Activated CD4-positive, alpha-beta memory T cell treated with anti-CD3 and anti-CD28 coated beads for 36 hours (primary cell): ENCODE measurements at regions of chr7 and their contacts with region 1.

Region 1: DNA sequence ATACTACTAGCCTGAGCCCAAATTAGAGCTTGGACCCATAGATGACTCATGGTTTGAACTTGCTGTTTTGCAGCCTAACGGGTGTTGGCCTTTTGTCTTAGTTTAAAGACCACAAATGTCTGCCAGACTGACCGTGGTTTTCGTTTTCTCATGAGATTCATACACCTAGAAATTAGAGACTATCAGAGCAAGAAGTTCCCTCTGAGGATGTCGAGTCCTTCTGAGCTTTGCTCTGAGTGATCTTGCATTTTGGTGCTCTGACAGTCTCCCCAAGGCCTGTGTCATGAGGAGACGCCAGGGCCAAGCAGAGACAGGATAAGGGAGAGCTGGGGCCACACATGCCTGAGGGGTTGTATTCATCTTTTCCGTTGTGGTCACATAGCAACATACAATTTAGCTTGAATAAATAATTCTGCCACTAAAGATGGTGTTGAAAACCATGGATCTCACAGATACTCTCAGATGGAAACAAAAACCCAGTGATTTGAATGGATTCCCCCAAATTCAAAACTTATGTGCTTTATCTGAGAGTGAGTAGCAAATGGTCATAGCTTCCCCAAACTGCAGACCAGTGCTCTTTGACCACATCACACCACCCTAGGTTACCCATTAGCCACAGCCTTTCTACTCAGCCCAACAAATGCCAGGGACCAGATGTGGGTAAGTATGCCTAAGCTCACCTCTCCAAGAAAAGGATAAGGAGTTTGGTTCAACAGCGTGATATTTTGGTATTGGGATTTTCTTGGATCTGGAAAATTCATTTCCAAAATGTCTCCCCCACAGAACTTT is 762.0 kb upstream of the IGFBP3 start:
- DNase-seq: no peak
- H3K4me3 Mint-ChIP-seq: no peak overlapping the region
- H3K27ac Mint-ChIP-seq: no peak overlapping the region
- H3K4me1 Mint-ChIP-seq: no peaks in the 10 kb centered on the region
- H3K27me3 Mint-ChIP-seq: no peaks in the 10 kb centered on the region

Region 2: GRCh38 chr7:46363688-46364303 is 319.2 kb before region 1 on chr7:
- CTCF ChIA-PET with region 1: no interaction called
- POLR2A ChIA-PET with region 1: no interaction called
- intact Hi-C with region 1: no loop called
- DNase-seq: no peak
- H3K4me3 Mint-ChIP-seq: no peak overlapping the region
- H3K27ac Mint-ChIP-seq: no peak overlapping the region
- H3K4me1 Mint-ChIP-seq: no peaks in the 10 kb centered on the region
- H3K27me3 Mint-ChIP-seq: no peaks in the 10 kb centered on the region

Region 3: GRCh38 chr7:46745707-46746090 is 62.7 kb after region 1 on chr7:
- CTCF ChIA-PET with region 1: no interaction called
- POLR2A ChIA-PET with region 1: no interaction called
- intact Hi-C with region 1: loop called (anchors 10 kb)
- DNase-seq: no peak
- H3K4me3 Mint-ChIP-seq: no peak overlapping the region
- H3K27ac Mint-ChIP-seq: no peak overlapping the region
- H3K4me1 Mint-ChIP-seq: no peaks in the 10 kb centered on the region
- H3K27me3 Mint-ChIP-seq: no peaks in the 10 kb centered on the region